ENCODE measurements at regions of chr6 and their contacts with region 1.

Region 1: DNA sequence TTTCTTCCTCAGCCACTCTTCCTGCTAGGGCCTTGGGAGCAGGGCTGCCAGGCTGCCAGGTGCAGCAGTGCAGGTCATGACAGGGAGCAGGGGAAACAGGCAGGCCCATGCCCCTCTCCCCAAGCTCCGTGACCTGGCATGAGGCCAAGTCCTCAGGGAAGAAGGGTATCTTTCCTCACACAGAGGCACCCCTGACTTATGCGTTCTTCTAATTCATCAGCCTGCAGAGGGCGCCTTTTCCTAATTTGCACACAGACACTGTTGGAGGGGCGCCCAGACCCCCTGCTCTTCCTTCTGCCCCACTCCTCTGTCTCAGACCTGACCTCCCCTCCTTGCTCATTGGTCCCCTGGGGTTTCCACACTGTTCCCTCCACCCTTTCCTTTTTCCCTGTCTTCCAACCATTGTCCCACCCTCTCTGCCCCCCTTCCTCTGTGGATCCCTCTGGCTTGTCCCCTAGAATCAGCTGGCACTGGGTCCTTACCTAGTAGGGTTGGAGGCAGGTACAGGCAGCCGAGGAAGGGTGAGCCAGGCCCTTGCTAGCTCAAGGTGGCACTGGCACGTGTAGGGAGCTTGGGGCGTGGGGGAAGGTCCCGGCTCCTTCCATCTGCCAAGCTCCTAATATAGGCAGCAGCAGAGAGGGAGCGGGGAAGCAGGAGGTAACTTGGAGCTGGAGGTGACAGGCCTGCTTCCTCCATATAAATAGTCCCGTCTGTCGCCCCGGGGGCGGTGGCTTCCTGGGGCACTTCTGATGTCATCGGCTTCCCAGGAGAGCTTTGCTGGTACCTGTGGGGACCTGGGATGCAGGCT is 154.9 kb upstream of the MLN start:
- DNase-seq: peak; percentile 75
- ATAC-seq: peak; percentile 74
- H3K4me3 Mint-ChIP-seq: no peak overlapping the region
- H3K27ac Mint-ChIP-seq: no peak overlapping the region
- H3K4me1 Mint-ChIP-seq: peaks cover 24% of the 10 kb centered on the region
- H3K27me3 Mint-ChIP-seq: peaks cover 3% of the 10 kb centered on the region
- CTCF ChIP-seq: peak; percentile 57

Region 2: DNA sequence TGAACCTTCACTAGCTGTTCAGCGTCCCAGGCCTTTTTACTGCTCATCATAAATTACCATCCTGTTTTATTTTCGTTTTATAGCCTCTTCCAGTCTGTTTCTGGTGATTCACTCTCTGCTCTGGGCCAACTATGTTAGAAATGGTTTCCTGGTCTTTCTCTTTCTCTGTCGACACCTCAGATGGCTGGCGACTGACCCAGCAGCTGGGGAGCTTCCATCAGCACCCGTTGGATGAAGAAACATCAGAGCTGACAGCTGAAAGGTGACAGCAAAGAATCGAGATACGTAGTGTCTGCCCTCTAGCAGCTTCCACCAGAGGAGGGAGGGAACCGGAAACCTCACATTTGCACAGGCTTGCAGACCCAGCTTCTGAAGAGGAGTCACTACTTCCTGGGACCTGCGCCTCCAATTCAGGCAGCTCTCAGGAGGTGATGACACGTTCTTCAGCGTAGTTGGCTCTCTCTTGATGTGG is 72.0 kb before region 1 on chr6:
- CTCF ChIA-PET with region 1: no interaction called
- POLR2A ChIA-PET with region 1: no interaction called
- DNase-seq: no peak
- ATAC-seq: no peak
- H3K4me3 Mint-ChIP-seq: no peak overlapping the region
- H3K27ac Mint-ChIP-seq: no peak overlapping the region
- H3K4me1 Mint-ChIP-seq: no peaks in the 10 kb centered on the region
- H3K27me3 Mint-ChIP-seq: no peaks in the 10 kb centered on the region
- CTCF ChIP-seq: no peak

Region 3: GRCh38 chr6:33926451-33926850 is 32.3 kb before region 1 on chr6:
- CTCF ChIA-PET with region 1: interaction called, 15 read pairs
- POLR2A ChIA-PET with region 1: interaction called, 3 read pairs
- DNase-seq: peak; percentile 47
- ATAC-seq: peak; percentile 96
- H3K4me3 Mint-ChIP-seq: no peak overlapping the region
- H3K27ac Mint-ChIP-seq: no peak overlapping the region
- H3K4me1 Mint-ChIP-seq: peaks cover 18% of the 10 kb centered on the region
- H3K27me3 Mint-ChIP-seq: peaks cover 5% of the 10 kb centered on the region; the same call in 1 of the 2 replicates
- CTCF ChIP-seq: no peak

Region 4: GRCh38 chr6:33975661-33976385 is 17.1 kb after region 1 on chr6:
- CTCF ChIA-PET with region 1: interaction called, 12 read pairs
- POLR2A ChIA-PET with region 1: no interaction called
- DNase-seq: peak; percentile 51
- ATAC-seq: peak; percentile 69
- H3K4me3 Mint-ChIP-seq: peak overlapping the region; percentile 68
- H3K27ac Mint-ChIP-seq: no peak overlapping the region
- H3K4me1 Mint-ChIP-seq: peaks cover 5% of the 10 kb centered on the region
- H3K27me3 Mint-ChIP-seq: peaks cover 52% of the 10 kb centered on the region
- CTCF ChIP-seq: no peak

Region 5: GRCh38 chr6:34015586-34015985 is 56.9 kb after region 1 on chr6:
- CTCF ChIA-PET with region 1: interaction called, 14 read pairs
- POLR2A ChIA-PET with region 1: no interaction called
- DNase-seq: peak; percentile 46
- ATAC-seq: peak; percentile 79
- H3K4me3 Mint-ChIP-seq: no peak overlapping the region
- H3K27ac Mint-ChIP-seq: no peak overlapping the region
- H3K4me1 Mint-ChIP-seq: peaks cover 6% of the 10 kb centered on the region
- H3K27me3 Mint-ChIP-seq: peaks cover 12% of the 10 kb centered on the region
- CTCF ChIP-seq: no peak

Region 6: GRCh38 chr6:34036357-34037069 is 77.8 kb after region 1 on chr6:
- CTCF ChIA-PET with region 1: no interaction called
- POLR2A ChIA-PET with region 1: no interaction called
- DNase-seq: no peak
- ATAC-seq: no peak
- H3K4me3 Mint-ChIP-seq: no peak overlapping the region
- H3K27ac Mint-ChIP-seq: no peak overlapping the region
- H3K4me1 Mint-ChIP-seq: no peaks in the 10 kb centered on the region
- H3K27me3 Mint-ChIP-seq: no peaks in the 10 kb centered on the region
- CTCF ChIP-seq: no peak